Common myeloid progenitor, CD34-positive (primary cell): ENCODE measurements at regions of chr3 and their contacts with region 1.

Region 1: GRCh38 chr3:194573691-194574437 is 59.4 kb downstream of the TMEM44 start:
- DNase-seq: peak; percentile 59 to 74 (median 72)
- H3K4me3 ChIP-seq: no peak overlapping the region
- H3K27ac ChIP-seq: no peak overlapping the region
- H3K4me1 ChIP-seq: peaks cover 0 to 11% (median 6%) of the 10 kb centered on the region in 4 experiments
- H3K27me3 ChIP-seq: peaks cover 2 to 29% (median 12%) of the 10 kb centered on the region in 5 experiments

Region 2: DNA sequence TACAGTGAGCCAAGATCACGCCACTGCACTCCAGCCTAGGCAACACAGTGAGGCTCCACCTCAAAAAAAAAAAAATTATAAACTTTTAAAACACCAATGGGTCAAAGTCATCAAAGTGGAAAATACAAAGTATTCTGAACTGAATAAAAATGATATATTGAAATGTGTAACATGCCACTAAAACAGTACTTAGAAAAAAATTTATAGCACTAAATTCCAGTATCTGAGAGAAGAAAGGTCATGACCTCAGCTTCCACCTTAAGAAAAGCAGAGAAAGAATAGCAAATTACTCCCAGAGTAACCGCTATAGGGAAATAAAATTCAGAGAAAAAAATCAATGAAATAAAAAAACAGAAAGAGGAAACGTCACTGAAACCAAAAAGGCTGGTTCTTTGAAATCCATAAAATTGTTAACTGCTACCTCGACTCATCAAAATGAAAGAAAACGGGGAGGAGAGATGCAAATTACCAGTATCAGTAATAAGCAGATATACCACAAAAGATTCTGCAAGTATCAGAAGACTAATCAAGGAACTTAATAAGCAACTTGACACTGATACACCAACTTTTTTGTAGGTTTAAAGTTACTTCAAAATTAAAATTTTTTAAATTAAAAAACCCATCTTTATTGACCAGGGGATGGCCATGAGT is 107.8 kb before region 1 on chr3:
- CTCF ChIA-PET with region 1: interaction called, 91 read pairs
- POLR2A ChIA-PET with region 1: no interaction called
- DNase-seq: peak in 1 of 3 donors; percentile 31
- H3K4me3 ChIP-seq: no peak overlapping the region
- H3K27ac ChIP-seq: no peak overlapping the region
- H3K4me1 ChIP-seq: peaks cover 0 to 8% (median 5%) of the 10 kb centered on the region in 4 experiments
- H3K27me3 ChIP-seq: no peaks in the 10 kb centered on the region

Region 3: GRCh38 chr3:194472290-194472920 is 101.5 kb before region 1 on chr3:
- CTCF ChIA-PET with region 1: interaction called, 91 read pairs
- POLR2A ChIA-PET with region 1: interaction called, 4 read pairs
- DNase-seq: peak; percentile 68 to 78 (median 77)
- H3K4me3 ChIP-seq: no peak overlapping the region
- H3K27ac ChIP-seq: no peak overlapping the region
- H3K4me1 ChIP-seq: peaks cover 0 to 1% (median 0%) of the 10 kb centered on the region in 4 experiments
- H3K27me3 ChIP-seq: no peaks in the 10 kb centered on the region

Region 4: DNA sequence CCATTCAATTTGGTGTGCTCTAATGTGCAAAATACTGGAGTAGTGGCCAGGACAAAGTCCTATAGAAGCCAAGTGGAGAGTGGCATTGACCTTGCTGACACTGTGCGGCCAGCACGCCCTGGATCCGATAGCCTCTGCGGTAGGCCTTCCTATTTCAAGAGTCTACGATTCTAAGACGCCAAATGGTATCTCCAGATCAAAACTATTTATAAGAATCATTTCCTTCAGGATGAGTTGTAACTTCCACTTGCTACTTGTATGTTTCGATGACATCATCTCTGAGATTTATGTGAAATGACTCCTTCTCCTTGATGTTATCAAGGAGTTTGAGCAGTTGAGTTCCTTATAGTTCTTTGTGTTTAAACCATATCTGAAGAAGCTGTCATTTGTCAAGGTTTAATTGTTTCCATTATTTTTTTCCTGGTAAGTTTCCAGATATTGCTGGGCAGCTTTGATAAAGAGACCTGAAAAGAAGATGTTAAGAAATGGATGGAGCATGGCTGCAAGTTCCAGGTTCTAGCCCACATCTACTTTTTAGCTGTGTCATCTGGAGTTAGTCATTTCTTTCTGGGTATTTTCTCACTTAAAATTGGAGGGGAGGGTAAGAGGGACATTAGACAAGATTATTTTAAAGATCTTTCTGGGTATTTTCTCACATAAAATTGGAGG is 12.4 kb before region 1 on chr3:
- CTCF ChIA-PET with region 1: interaction called, 13 read pairs
- POLR2A ChIA-PET with region 1: interaction called, 3 read pairs
- DNase-seq: peak; percentile 42 to 71 (median 61)
- H3K4me3 ChIP-seq: no peak overlapping the region
- H3K27ac ChIP-seq: no peak overlapping the region
- H3K4me1 ChIP-seq: peaks cover 0 to 4% (median 2%) of the 10 kb centered on the region in 4 experiments
- H3K27me3 ChIP-seq: no peaks in the 10 kb centered on the region